ENCODE measurements at regions of chr11 and their contacts with region 1.

Region 1: GRCh38 chr11:61361686-61362541 is at the starts of genes CYB561A3 and TMEM138:
- DNase-seq: peak; percentile 95 to 96
- ATAC-seq: peak; percentile 98
- H3K4me3 ChIP-seq: peak within 1 kb of the TSS; percentile 82
- H3K27ac ChIP-seq: peak within 1 kb of the TSS; percentile 96 to 97
- H3K4me1 ChIP-seq: peaks cover 15% of the 10 kb centered on the region; the same call in 2 of the 3 replicates
- CTCF ChIP-seq: no peak
- EP300 ChIP-seq: no peak
- POLR2A ChIP-seq: peak; percentile 94
- RAD21 ChIP-seq: no peak
- polyA plus RNA-seq, gene CYB561A3: 50.8 and 58.1 TPM in 2 replicates
- polyA plus RNA-seq, gene TMEM138: 143 and 156 TPM in 2 replicates

Region 2: DNA sequence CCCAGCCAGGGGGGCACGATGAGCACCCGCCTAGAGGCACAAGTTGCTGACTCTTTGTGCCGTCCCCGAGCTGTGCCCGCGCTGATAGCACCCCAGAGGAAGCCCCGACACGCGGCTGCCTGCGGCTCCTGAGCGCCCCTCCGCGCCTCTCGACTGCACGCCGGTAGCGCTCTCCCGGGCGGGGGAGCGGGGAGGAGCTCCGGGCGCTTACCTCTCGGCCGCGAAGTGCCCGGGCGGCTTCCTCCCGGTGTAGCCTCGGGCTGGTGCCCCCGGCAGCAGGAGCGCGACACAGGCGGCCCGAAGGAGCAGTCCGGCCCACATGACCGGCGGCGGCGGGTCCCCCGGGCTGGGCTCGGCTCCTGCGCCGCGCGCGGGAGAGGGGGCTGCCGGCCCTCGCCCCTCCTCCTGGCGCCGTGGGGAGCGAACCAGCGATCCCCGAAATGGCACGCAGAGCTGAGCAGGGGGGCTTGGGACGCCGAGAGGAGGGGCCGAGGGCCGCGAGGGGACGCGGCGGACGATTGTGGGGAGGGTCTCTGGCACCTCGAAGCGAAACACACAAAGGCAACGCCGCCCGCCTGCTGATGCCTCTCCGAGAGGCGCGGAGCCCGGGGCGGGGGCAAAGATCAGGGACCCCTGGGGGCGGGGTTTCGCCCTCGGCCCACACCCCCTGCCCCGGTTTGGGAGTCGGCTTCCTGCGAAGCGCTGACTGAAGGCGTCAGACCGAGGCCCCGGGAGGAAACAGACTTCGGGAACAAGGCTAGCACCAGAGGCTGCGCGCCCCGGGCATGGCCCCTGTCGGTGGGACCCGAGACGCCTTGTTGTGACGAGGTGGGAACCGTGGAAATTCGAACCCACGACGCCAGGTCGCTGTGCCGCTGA is 67.0 kb before region 1 on chr11 and contains the start of gene VWCE:
- CTCF ChIA-PET with region 1: no interaction called
- POLR2A ChIA-PET with region 1: interaction called, 15 read pairs
- DNase-seq: peak; percentile 50 to 62
- ATAC-seq: peak; percentile 80 to 87
- H3K4me3 ChIP-seq: peak within 1 kb of the TSS; percentile 61
- H3K27ac ChIP-seq: peak within 1 kb of the TSS; percentile 81 to 87
- H3K4me1 ChIP-seq: peaks cover 14% of the 10 kb centered on the region; the same call in 1 of the 3 replicates
- CTCF ChIP-seq: peak; percentile 29; the same call in 2 of the 3 replicates
- EP300 ChIP-seq: no peak
- POLR2A ChIP-seq: peak; percentile 41
- RAD21 ChIP-seq: peak; percentile 9 to 43; a peak in 4 of 5 replicates
- polyA plus RNA-seq, gene VWCE: 0.53 and 0.65 TPM in 2 replicates

Region 3: DNA sequence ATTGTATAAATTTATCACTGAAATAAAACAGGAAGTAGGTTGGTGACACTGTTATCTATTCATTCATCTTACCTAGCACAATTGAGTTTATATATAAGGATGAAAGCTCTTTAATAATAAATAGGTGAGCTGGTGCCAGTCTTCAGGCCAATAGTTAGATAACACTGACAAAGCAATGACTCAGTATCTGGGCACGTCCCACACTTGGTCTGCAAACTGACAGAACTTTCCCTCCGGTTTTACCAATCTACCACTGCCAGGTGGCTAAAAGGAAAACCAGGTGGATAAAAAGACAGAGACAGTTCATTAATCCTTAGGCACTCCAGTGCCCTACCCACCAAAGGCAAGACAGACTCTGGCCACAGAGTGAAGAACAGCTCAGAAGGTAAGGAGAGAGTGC is 46.7 kb before region 1 on chr11:
- CTCF ChIA-PET with region 1: no interaction called
- POLR2A ChIA-PET with region 1: no interaction called
- DNase-seq: no peak
- ATAC-seq: no peak
- H3K4me3 ChIP-seq: no peak overlapping the region
- H3K27ac ChIP-seq: no peak overlapping the region
- H3K4me1 ChIP-seq: no peaks in the 10 kb centered on the region
- CTCF ChIP-seq: no peak
- EP300 ChIP-seq: no peak
- POLR2A ChIP-seq: no peak
- RAD21 ChIP-seq: no peak

Region 4: DNA sequence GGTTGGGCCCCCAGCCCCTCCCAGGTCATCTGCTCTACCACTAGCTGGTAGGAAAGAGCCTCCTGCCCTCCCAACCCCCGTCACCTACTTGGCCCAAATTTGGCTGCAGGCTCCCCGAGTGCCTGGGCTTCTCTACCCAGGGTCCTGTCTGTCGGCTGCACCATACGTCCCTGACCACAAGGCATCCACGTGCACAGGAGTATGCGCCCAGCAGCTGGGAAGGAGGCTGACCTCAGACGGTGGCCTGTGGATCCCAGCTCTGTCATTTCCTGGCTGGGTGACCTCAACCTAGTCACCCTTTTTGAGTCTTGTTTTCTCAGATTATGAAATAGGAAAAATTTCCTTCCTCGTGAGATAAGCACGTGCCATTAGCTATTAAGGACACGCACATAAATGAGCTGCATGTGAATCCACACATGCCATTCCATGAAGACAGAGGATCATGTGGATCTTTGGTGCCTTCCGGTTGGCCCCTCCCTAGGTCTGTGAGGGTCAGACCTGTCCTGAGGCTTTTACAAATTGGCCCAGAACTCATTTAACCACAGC is 13.9 kb before region 1 on chr11:
- CTCF ChIA-PET with region 1: interaction called, 368 read pairs
- POLR2A ChIA-PET with region 1: interaction called, 22 read pairs
- DNase-seq: no peak
- ATAC-seq: no peak
- H3K4me3 ChIP-seq: no peak overlapping the region
- H3K27ac ChIP-seq: no peak overlapping the region
- H3K4me1 ChIP-seq: no peaks in the 10 kb centered on the region
- CTCF ChIP-seq: no peak
- EP300 ChIP-seq: no peak
- POLR2A ChIP-seq: no peak
- RAD21 ChIP-seq: no peak

Region 5: DNA sequence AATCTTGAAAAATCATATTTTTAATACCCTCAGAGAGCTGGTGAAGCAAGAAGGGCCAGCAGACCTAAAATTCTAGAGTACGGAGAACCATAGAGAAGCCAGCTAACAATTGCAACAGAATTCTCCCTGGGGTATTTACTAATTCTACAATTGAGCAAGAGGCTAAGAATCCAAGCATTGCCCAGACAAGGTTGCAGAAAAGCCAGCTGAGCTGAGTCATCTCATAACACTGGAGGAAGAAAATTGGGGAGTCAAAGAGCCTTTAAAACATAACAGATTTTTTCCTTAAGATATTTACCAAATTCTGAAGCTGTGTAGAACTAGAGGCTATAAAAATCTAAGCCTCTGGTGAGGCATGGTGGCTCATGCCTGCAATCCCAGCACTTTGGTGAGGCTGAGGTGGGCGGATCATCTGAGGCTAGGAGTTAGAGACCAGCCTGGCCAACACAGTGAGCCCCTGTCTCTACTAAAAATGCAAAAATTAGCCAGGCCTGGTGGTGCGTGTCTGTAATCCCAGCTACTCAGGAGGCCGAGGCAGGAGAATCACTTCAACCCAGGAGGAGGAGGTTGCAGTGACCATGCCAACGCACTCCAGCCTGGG is 16.9 kb after region 1 on chr11:
- CTCF ChIA-PET with region 1: interaction called, 521 read pairs
- POLR2A ChIA-PET with region 1: interaction called, 36 read pairs
- DNase-seq: peak; percentile 72 to 74
- ATAC-seq: peak; percentile 91 to 99
- H3K4me3 ChIP-seq: no peak overlapping the region
- H3K27ac ChIP-seq: peak overlapping the region; percentile 76 to 87
- H3K4me1 ChIP-seq: peaks cover 20% of the 10 kb centered on the region
- CTCF ChIP-seq: no peak
- EP300 ChIP-seq: 0 out of 5 replicates have a peak, but pooled peaks of 1 of the 2 experiments have one; percentile 24
- POLR2A ChIP-seq: no peak
- RAD21 ChIP-seq: 0 out of 5 replicates have a peak, but pooled peaks of 1 of the 2 experiments have one; percentile 8

Region 6: GRCh38 chr11:61384271-61385242 is 22.6 kb after region 1 on chr11:
- CTCF ChIA-PET with region 1: interaction called, 521 read pairs
- POLR2A ChIA-PET with region 1: interaction called, 32 read pairs
- DNase-seq: peak in 1 of 2 experiments; percentile 66
- ATAC-seq: peak; percentile 72 to 76
- H3K4me3 ChIP-seq: no peak overlapping the region
- H3K27ac ChIP-seq: no peak overlapping the region
- H3K4me1 ChIP-seq: peaks cover 3% of the 10 kb centered on the region; the same call in 2 of the 3 replicates
- CTCF ChIP-seq: peak; percentile 17; the same call in 1 of the 3 replicates
- EP300 ChIP-seq: no peak
- POLR2A ChIP-seq: no peak
- RAD21 ChIP-seq: peak; percentile 28 to 54; a peak in 2 of 5 replicates

Region 7: DNA sequence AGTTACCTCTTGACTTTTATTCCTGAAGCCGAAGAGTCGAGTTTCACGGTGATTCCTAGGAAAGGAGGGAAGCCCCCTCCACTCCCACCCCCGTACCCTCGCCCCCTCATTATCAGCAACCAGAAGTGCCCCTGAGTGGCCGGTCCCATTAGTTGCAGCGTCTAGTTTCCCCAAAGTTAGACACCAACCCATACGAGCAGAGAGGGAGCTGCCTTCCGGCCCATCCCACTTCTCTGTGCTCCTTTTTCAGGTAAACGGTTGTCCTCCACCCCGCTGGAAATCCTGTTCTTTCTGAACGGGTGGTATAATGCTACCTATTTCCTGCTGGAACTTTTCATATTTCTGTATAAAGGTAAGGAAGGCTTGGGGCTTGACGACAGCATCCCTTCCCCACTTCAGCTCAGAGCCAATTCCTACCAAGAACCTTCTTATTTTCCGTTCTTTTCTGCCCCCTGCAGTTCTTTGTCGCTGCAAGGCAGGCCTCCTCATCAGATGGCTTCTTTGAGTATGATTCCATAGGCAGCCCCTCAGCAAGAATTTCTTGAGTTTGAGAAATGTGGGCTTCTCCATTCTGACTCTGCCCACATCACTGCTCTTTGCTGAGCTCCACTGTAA is 31.2 kb after region 1 on chr11:
- CTCF ChIA-PET with region 1: interaction called, 521 read pairs
- POLR2A ChIA-PET with region 1: interaction called, 33 read pairs
- DNase-seq: peak; percentile 28 to 35
- ATAC-seq: peak; percentile 51 to 64; a peak in 5 of 6 replicates
- H3K4me3 ChIP-seq: peak overlapping the region; percentile 69
- H3K27ac ChIP-seq: peak overlapping the region; percentile 82 to 90
- H3K4me1 ChIP-seq: 0 out of 3 replicates have a peak, but pooled peaks cover 8% of the 10 kb centered on the region
- CTCF ChIP-seq: peak; percentile 32
- EP300 ChIP-seq: no peak
- POLR2A ChIP-seq: no peak
- RAD21 ChIP-seq: peak; percentile 41 to 49; a peak in 4 of 5 replicates

Region 8: GRCh38 chr11:61429691-61430582 is 68.0 kb after region 1 on chr11 and contains the starts of genes CPSF7 and SDHAF2:
- CTCF ChIA-PET with region 1: interaction called, 3 read pairs
- POLR2A ChIA-PET with region 1: interaction called, 15 read pairs
- DNase-seq: peak; percentile 94 to 97
- ATAC-seq: peak; percentile 96 to 97
- H3K4me3 ChIP-seq: peak within 1 kb of the TSS; percentile 82
- H3K27ac ChIP-seq: peak within 1 kb of the TSS; percentile 91 to 98
- H3K4me1 ChIP-seq: peaks cover 27% of the 10 kb centered on the region
- CTCF ChIP-seq: no peak
- EP300 ChIP-seq: no peak
- POLR2A ChIP-seq: peak; percentile 55
- RAD21 ChIP-seq: no peak
- polyA plus RNA-seq, gene CPSF7: 56.7 and 72.9 TPM in 2 replicates
- polyA plus RNA-seq, gene SDHAF2: 76.4 and 106 TPM in 2 replicates

Measured in A549 (cell line).